ENCODE measurements at regions of chr6 and their contacts with region 1.

Region 1: GRCh38 chr6:142827369-142827768 is 117.6 kb downstream of the HIVEP2 start:
- DNase-seq: no peak
- ATAC-seq: no peak
- H3K4me3 Mint-ChIP-seq: no peak overlapping the region
- H3K27ac Mint-ChIP-seq: no peak overlapping the region
- H3K4me1 Mint-ChIP-seq: peaks cover 25% of the 10 kb centered on the region
- H3K27me3 Mint-ChIP-seq: no peaks in the 10 kb centered on the region

Region 2: DNA sequence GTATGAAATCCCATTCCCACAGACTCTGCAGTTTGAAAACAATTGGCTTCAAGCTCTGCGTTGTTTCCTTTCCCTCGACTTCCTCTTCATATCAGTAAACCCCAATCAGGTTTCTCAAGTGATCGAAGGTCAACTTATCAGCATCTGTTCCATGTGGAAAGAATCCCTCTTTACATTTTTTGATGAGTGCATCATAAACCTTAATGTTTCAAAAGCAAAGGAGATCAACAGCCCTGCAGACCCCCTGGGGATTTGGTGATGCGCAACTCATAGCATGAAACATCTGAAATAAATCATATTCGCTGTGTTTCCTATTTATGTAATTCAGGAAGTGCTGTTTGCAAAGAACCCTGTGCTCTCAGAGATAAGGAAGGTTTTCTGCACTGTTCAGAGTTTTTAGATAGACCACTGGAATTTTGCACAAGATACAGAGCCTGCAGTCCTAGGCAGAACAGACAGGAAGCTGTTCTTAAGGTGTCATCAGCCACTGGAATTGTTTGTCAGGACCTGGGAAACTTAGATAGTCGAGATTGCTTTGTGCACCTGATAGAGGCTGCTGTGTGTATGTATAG is 98.4 kb before region 1 on chr6:
- CTCF ChIA-PET with region 1: no interaction called
- DNase-seq: no peak
- ATAC-seq: no peak
- H3K4me3 Mint-ChIP-seq: no peak overlapping the region
- H3K27ac Mint-ChIP-seq: no peak overlapping the region
- H3K4me1 Mint-ChIP-seq: peaks cover 6% of the 10 kb centered on the region
- H3K27me3 Mint-ChIP-seq: no peaks in the 10 kb centered on the region

Region 3: DNA sequence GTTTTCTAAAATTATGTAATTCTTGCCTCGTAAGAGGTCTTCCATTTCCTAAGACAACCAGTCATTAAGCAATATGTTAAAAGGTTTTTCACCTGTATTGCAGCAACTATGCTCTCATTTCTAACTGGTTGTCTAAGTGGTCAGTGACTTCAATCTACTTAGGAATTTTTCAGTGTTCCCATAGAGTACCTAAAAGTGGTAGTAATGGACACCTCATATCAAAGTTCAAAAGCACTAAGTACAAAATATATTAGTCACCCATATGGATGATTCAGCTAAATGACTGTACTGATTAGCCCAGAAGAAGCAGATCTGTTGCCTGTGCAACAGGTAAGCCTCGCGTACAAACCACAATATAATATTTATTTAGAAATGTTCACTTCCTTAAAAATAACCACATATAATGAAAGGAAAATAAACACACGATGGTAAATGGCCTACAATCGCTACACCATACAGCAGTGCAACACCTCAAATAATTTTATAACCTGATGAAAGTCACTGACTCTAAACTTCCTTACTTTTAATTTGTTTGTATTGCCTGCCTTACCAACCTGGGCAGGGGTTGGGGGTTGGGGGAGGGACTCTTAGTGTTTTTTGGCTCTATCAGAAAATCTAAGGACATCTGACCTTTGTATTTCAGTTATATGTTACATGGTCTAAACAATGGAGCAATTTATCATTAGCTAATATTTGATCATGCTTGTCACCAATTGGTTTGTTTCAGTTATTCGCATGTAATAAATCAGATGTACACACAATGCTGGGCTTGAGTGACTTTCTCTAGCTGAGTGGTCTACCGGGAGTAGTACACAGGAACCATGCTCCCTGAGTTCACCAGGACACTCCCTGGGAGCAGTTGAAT is 11.7 kb after region 1 on chr6:
- CTCF ChIA-PET with region 1: interaction called, 13 read pairs
- DNase-seq: no peak
- ATAC-seq: no peak
- H3K4me3 Mint-ChIP-seq: peak overlapping the region; percentile 31
- H3K27ac Mint-ChIP-seq: peak overlapping the region; percentile 77
- H3K4me1 Mint-ChIP-seq: peaks cover 61% of the 10 kb centered on the region
- H3K27me3 Mint-ChIP-seq: no peaks in the 10 kb centered on the region

Region 4: DNA sequence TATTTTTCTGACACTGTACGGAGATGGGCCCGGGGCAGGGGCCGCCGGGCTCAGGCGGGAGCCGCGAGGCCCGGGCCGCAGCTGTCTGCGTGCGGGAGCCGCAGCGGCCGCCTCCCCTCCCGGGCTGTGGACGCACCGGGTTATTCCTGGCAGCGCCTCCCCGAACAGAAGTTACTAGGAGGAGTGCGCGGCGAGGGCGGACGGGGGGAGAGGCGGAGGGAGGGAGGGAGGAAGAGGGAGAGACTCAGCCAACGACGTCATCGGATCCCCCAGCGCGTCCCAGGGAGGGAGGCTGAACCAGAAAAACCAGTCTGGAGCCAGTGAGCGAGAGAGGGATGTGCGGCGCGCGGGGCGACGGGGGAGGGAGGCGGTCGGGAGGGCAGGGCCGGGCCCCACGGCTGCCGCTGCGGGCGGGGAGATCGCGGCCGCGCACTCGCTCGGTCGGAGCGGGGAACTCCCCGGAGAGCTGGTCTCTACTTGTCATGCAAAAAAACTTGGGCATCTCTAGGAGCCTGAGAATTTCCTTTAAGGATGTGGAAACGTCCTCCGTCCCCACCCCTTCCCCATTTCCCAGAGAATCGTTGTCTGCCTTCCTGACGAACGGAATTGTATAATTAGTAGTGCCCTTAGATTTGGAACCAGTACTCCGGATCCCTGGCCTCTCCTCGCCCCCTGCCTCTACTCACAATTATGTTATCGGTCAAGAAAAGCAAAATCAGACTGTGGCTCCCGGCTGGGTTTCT is 119.0 kb after region 1 on chr6:
- CTCF ChIA-PET with region 1: no interaction called
- DNase-seq: peak; percentile 92
- ATAC-seq: peak; percentile 32
- H3K4me3 Mint-ChIP-seq: peak overlapping the region; percentile 84
- H3K27ac Mint-ChIP-seq: peak overlapping the region; percentile 96
- H3K4me1 Mint-ChIP-seq: peaks cover 31% of the 10 kb centered on the region
- H3K27me3 Mint-ChIP-seq: no peaks in the 10 kb centered on the region

Measured in activated CD8-positive, alpha-beta memory T cell treated with anti-CD3 and anti-CD28 coated beads, Interleukin-2, amount 10 ng/mL, durations not matched to agents 7 days and 5 days (primary cell).